ENCODE measurements at regions of chr14 and their contacts with region 1.

Region 1: DNA sequence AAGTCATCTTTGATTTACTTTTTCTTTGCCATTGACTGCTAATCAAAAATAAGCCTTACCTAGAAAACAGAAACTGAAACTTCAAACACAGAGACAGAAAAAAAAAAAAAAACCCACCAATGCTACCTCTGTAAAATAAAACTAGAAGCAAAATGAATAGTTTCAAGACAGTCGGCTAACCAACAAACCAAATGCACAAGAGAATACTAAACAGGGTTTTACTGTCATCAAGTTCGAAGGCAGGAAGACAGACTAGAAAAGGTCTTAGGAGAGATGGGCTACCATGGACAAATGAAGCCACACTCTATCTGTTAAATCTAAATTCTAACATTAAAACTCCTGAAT is 59.5 kb downstream of the SEL1L start:
- DNase-seq: no peak
- H3K4me3 Mint-ChIP-seq: peak overlapping the region; percentile 27
- H3K27ac Mint-ChIP-seq: peak overlapping the region; percentile 53
- H3K4me1 Mint-ChIP-seq: peaks cover 52% of the 10 kb centered on the region
- H3K27me3 Mint-ChIP-seq: no peaks in the 10 kb centered on the region

Region 2: GRCh38 chr14:80941241-80942182 is 532.6 kb before region 1 on chr14 and contains the start of gene CEP128:
- intact Hi-C with region 1: loop called (anchors 5 kb)
- DNase-seq: peak; percentile 79
- H3K4me3 Mint-ChIP-seq: peak within 1 kb of the TSS; percentile 88
- H3K27ac Mint-ChIP-seq: peak within 1 kb of the TSS; percentile 88
- H3K4me1 Mint-ChIP-seq: peaks cover 30% of the 10 kb centered on the region
- H3K27me3 Mint-ChIP-seq: no peaks in the 10 kb centered on the region
- total RNA-seq, gene CEP128: 18.2 and 22.0 TPM in 2 replicates

Region 3: DNA sequence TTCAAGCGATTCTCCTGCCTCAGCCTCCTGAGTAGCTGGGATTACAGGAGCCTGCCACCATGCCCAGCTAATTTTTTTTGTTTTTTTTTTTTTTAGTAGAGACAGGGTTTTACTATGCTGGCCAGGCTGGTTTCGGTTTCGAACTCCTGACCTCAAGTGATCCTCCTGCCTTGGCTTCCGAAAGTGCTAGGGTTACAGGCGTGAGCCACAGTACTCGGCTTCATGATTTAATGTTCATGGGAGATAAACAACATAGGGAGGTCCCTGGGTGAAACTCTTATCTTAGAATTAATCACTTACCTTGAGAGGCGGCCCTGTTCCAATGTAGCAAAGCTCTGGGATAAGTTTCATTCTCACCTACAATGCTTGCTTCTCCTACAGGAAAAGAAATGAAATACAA is 11.3 kb after region 1 on chr14:
- intact Hi-C with region 1: no loop called
- DNase-seq: no peak
- H3K4me3 Mint-ChIP-seq: no peak overlapping the region
- H3K27ac Mint-ChIP-seq: no peak overlapping the region
- H3K4me1 Mint-ChIP-seq: peaks cover 6% of the 10 kb centered on the region
- H3K27me3 Mint-ChIP-seq: no peaks in the 10 kb centered on the region

Region 4: GRCh38 chr14:81519200-81520011 is 45.3 kb after region 1 on chr14:
- intact Hi-C with region 1: loop called (anchors 2 kb)
- DNase-seq: no peak
- H3K4me3 Mint-ChIP-seq: peak overlapping the region; percentile 50
- H3K27ac Mint-ChIP-seq: peak overlapping the region; percentile 88
- H3K4me1 Mint-ChIP-seq: peaks cover 45% of the 10 kb centered on the region
- H3K27me3 Mint-ChIP-seq: no peaks in the 10 kb centered on the region

Region 5: GRCh38 chr14:81550001-81550637 is 76.0 kb after region 1 on chr14:
- intact Hi-C with region 1: loop called (anchors 1 kb)
- DNase-seq: no peak
- H3K4me3 Mint-ChIP-seq: no peak overlapping the region
- H3K27ac Mint-ChIP-seq: peak overlapping the region; percentile 27
- H3K4me1 Mint-ChIP-seq: peaks cover 25% of the 10 kb centered on the region
- H3K27me3 Mint-ChIP-seq: peaks cover 1% of the 10 kb centered on the region